Adrenal gland (tissue), 19 donors: ENCODE measurements at regions of chr12 and their contacts with region 1.

Region 1: DNA sequence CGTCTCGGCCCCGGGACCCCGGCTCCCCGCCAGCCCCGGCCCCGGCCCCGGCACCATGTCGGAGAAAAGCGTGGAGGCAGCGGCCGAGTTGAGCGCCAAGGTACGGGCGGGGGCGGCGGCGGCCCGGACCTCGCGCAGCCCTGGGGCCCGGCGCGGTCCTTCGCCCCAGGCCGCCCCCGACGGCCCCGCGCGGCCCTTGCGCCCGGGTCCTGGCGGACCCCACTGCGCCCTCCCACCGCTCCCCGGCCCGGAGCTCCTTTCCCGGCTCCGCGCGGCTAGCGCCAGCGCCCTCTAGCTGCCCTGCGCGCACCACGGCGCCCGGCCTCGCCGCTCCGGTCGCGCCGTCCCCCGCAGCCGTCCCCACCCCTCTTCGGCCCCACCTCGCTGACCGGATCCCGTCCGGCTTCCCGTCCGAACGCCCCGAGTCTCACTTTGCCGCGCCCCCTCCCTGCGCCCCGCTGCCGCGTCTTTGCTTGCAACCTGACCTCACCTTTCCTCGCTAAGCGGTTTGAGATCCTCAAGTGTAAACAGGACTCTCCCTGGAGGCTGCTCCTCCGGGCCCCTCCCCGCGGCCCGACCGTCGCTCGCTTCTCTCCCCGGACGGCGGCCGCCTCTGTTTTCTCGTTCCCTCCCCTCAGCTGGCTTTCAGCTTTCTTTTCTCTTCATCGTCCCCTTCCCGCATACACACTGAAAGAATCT is 637 bp downstream of the PTMS start:
- DNase-seq: peak; percentile 66 to 82 (median 74)
- H3K4me3 ChIP-seq: peak overlapping the region; percentile 34 to 98 (median 84)
- H3K27ac ChIP-seq: peak overlapping the region in 4 of 5 donors; percentile 17 to 97 (median 76)
- H3K4me1 ChIP-seq: peaks cover 25 to 46% of the 10 kb centered on the region in 2 donors
- H3K27me3 ChIP-seq: no peaks in the 10 kb centered on the region
- CTCF ChIP-seq: peak in 5 of 6 experiments; percentile 18 to 79 (median 64)
- POLR2A ChIP-seq: peak in 1 of 2 donors; percentile 15

Region 2: DNA sequence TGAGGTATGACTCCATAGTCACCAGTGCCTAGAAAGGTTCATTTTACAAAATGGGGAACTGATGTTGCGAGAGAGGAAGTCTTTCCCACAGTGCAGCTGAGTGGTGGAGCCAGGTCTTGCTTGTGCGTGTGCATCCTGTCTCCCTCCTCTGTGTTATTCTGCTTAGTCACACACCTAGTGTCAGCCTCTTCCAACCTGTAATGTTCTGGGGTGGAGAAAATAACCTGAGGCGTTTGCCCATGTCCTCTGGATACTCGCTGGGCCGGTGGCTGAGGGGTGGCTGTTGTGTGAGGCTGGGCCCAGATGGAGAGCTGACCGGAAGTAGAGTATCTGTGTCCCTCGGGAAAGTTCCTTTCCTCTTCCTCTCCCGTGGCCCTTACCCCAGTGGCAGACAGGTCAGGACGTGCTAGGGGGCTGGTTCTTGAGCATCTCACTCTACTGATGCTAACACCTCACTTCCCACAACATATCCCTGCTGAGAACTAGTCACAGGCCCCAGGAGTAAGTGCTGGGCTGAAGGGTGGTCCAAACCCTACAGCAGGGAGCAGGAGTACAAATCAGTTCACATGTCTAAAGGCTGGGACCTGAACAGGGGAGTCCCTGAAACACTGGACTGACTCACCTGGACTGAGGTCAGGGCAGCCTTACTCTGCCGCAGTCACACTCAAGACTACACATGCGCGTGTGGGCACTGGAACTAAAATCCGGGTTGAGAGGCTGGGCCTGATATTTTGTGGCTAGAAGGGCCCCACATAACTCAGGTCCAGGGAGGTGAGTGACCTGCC is 20.9 kb before region 1 on chr12:
- intact Hi-C with region 1: loop called in 1 of 2 experiments (anchors 2 kb)
- DNase-seq: no peak
- H3K4me3 ChIP-seq: no peak overlapping the region
- H3K27ac ChIP-seq: peak overlapping the region in 2 of 5 donors; percentile 5 to 81
- H3K4me1 ChIP-seq: peaks cover 0 to 2% of the 10 kb centered on the region in 2 donors
- H3K27me3 ChIP-seq: no peaks in the 10 kb centered on the region
- CTCF ChIP-seq: no peak
- POLR2A ChIP-seq: no peak